ENCODE measurements at regions of chr13 and their contacts with region 1.

Region 1: GRCh38 chr13:20160847-20161274 is at the start of gene GJA3:
- DNase-seq: peak; percentile 37
- ATAC-seq: peak; percentile 53
- H3K4me3 ChIP-seq: peak within 1 kb of the TSS; percentile 68
- H3K27ac ChIP-seq: peak within 1 kb of the TSS; percentile 46
- H3K4me1 ChIP-seq: peaks cover 2% of the 10 kb centered on the region
- H3K27me3 ChIP-seq: no peaks in the 10 kb centered on the region
- CTCF ChIP-seq: no peak
- POLR2A ChIP-seq: no peak
- RAD21 ChIP-seq: no peak
- total RNA-seq, gene GJA3: 2.7 and 3.6 TPM in 2 replicates

Region 2: GRCh38 chr13:19952850-19953249 is 208.0 kb before region 1 on chr13:
- CTCF ChIA-PET with region 1: no interaction called
- POLR2A ChIA-PET with region 1: no interaction called
- dilution Hi-C with region 1: no loop called
- in situ Hi-C with region 1: no loop called
- intact Hi-C with region 1: no loop called
- DNase-seq: no peak
- ATAC-seq: no peak
- H3K4me3 ChIP-seq: no peak overlapping the region
- H3K27ac ChIP-seq: no peak overlapping the region
- H3K4me1 ChIP-seq: peaks cover 2% of the 10 kb centered on the region; the same call in 1 of the 2 replicates
- H3K27me3 ChIP-seq: no peaks in the 10 kb centered on the region
- CTCF ChIP-seq: no peak
- POLR2A ChIP-seq: no peak
- RAD21 ChIP-seq: no peak

Region 3: GRCh38 chr13:19984430-19985218 is 176.2 kb before region 1 on chr13:
- CTCF ChIA-PET with region 1: interaction called, 3 read pairs
- POLR2A ChIA-PET with region 1: no interaction called
- dilution Hi-C with region 1: no loop called
- in situ Hi-C with region 1: no loop called
- intact Hi-C with region 1: loop called (anchors 1 kb)
- DNase-seq: peak; percentile 72
- ATAC-seq: peak; percentile 97
- H3K4me3 ChIP-seq: no peak overlapping the region
- H3K27ac ChIP-seq: no peak overlapping the region; the same call in 1 of the 2 replicates
- H3K4me1 ChIP-seq: peaks cover 4% of the 10 kb centered on the region
- H3K27me3 ChIP-seq: no peaks in the 10 kb centered on the region
- CTCF ChIP-seq: peak; percentile 79
- POLR2A ChIP-seq: no peak
- RAD21 ChIP-seq: peak; percentile 60

Region 4: GRCh38 chr13:20057963-20058362 is 102.9 kb before region 1 on chr13:
- CTCF ChIA-PET with region 1: no interaction called
- POLR2A ChIA-PET with region 1: no interaction called
- dilution Hi-C with region 1: no loop called
- in situ Hi-C with region 1: no loop called
- intact Hi-C with region 1: loop called (anchors 5 kb)
- DNase-seq: no peak
- ATAC-seq: no peak
- H3K4me3 ChIP-seq: no peak overlapping the region
- H3K27ac ChIP-seq: no peak overlapping the region
- H3K4me1 ChIP-seq: no peaks in the 10 kb centered on the region
- H3K27me3 ChIP-seq: no peaks in the 10 kb centered on the region
- CTCF ChIP-seq: peak; percentile 22; the same call in 1 of the 2 replicates
- POLR2A ChIP-seq: no peak
- RAD21 ChIP-seq: no peak; the same call in 1 of the 2 replicates

Region 5: GRCh38 chr13:20136781-20137703 is 23.8 kb before region 1 on chr13:
- CTCF ChIA-PET with region 1: no interaction called
- POLR2A ChIA-PET with region 1: no interaction called
- dilution Hi-C with region 1: no loop called
- in situ Hi-C with region 1: no loop called
- intact Hi-C with region 1: loop called (anchors 1 kb)
- DNase-seq: no peak
- ATAC-seq: peak; percentile 68
- H3K4me3 ChIP-seq: no peak overlapping the region
- H3K27ac ChIP-seq: no peak overlapping the region
- H3K4me1 ChIP-seq: peaks cover 2% of the 10 kb centered on the region; the same call in 1 of the 2 replicates
- H3K27me3 ChIP-seq: peaks cover 13% of the 10 kb centered on the region
- CTCF ChIP-seq: peak; percentile 23; the same call in 1 of the 2 replicates
- POLR2A ChIP-seq: no peak
- RAD21 ChIP-seq: no peak

Region 6: DNA sequence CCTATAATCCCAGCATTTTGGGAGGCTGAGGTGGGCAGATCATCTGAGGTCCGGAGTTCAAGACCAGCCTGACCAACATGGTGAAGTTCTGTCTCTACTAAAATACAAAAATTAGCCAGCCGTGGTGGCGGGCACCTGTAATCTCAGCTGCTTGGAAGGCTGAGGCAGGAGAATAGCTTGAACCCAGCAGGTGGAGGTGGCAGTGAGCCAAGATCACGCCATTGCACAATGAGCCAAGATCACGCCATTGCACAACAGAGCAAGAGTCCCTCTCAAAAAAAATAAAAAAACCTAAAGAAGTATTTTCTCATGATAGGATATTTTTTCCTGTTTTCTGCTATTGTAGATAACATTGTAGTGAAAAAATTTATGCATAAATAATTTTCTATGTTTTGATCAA is 419.4 kb after region 1 on chr13:
- CTCF ChIA-PET with region 1: no interaction called
- POLR2A ChIA-PET with region 1: no interaction called
- dilution Hi-C with region 1: no loop called
- in situ Hi-C with region 1: no loop called
- intact Hi-C with region 1: no loop called
- DNase-seq: no peak
- ATAC-seq: no peak
- H3K4me3 ChIP-seq: no peak overlapping the region
- H3K27ac ChIP-seq: no peak overlapping the region
- H3K4me1 ChIP-seq: no peaks in the 10 kb centered on the region
- H3K27me3 ChIP-seq: no peaks in the 10 kb centered on the region
- CTCF ChIP-seq: no peak
- POLR2A ChIP-seq: no peak
- RAD21 ChIP-seq: no peak

Measured in IMR-90 (cell line).